ENCODE measurements at regions of chr20 and their contacts with region 1.

Region 1: DNA sequence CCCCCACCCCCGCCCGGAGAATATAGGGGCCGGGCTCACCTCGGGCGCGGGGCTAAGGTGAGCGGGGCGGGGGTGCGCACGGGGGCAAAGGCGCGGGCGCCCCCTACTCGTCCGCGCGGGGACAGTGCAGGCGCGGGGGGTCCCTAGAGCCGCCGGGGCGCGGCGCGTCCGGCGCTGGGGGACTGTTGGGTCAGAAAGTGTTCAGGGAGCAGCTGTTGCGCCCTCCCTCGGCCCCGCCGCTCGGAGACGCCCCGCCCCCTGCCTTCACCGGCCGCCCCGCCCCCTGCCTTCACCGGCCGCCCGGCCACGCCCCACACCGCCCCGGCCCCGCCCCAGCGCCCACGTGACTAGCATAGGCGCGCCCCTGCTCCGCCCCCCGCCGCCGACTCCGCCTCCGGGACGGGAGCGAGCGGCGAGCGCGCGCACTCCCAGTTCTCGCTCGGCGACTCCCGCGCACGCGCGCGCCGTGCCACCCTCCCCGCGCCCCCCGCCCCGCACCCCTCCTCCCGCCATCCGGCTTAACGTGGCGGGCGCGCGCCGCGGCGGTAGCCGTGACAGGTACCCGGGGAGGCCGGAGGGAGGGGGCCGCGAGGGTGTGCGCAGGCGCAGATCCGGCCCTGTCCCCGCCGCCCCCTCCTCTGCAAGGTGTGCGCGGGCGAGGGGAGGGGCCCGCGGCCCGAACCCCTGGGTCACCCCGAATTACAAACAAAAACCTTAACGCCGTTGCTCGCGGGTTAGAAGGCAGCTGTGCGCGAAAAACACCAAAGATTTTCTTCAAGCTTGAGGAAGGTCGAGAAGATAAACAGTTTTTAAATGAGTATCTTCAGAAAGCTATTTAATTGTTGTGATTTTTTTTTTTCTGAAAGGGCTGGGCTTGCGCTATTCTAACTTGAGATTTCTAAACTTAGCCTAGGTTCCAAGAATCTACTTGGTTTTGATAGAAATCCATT is 704 bp upstream of the ZNF217 start:
- DNase-seq: peak; percentile 99
- ATAC-seq: peak; percentile 74
- H3K4me3 Mint-ChIP-seq: peak overlapping the region; percentile 93
- H3K27ac Mint-ChIP-seq: peak overlapping the region; percentile 89
- H3K4me1 Mint-ChIP-seq: peaks cover 57% of the 10 kb centered on the region
- H3K27me3 Mint-ChIP-seq: no peaks in the 10 kb centered on the region
- CTCF ChIP-seq: no peak

Region 2: DNA sequence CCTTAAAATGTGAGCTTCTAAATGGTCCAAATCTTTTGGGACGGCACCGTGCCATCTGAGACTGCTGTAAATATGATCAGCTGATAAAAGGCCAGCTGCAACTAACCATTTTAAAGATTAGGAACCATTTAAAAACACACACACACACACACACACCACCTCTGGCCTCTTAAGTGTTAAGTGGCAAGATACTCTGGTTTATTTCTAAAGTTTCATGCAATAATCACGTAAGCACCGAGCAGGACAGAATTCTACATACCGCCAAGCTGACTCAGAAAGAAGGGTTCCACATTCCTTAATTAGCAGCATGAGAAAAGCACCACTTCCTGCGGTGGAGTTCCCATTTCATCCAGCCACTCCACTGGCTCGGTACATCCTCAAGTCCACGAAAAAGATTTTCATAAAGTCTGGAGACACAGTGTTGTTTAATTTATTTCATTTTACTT is 17.1 kb after region 1 on chr20:
- CTCF ChIA-PET with region 1: interaction called, 5 read pairs
- POLR2A ChIA-PET with region 1: interaction called, 14 read pairs
- intact Hi-C with region 1: loop called (anchors 2 kb)
- DNase-seq: no peak
- ATAC-seq: no peak
- H3K4me3 Mint-ChIP-seq: peak overlapping the region; percentile 24
- H3K27ac Mint-ChIP-seq: peak overlapping the region; percentile 46
- H3K4me1 Mint-ChIP-seq: peaks cover 31% of the 10 kb centered on the region
- H3K27me3 Mint-ChIP-seq: no peaks in the 10 kb centered on the region
- CTCF ChIP-seq: no peak

Region 3: GRCh38 chr20:53652090-53652858 is 57.9 kb after region 1 on chr20:
- CTCF ChIA-PET with region 1: no interaction called
- POLR2A ChIA-PET with region 1: interaction called, 11 read pairs
- intact Hi-C with region 1: loop called (anchors 2 kb)
- DNase-seq: no peak
- ATAC-seq: peak; percentile 43
- H3K4me3 Mint-ChIP-seq: peak overlapping the region; percentile 61
- H3K27ac Mint-ChIP-seq: peak overlapping the region; percentile 90
- H3K4me1 Mint-ChIP-seq: peaks cover 50% of the 10 kb centered on the region
- H3K27me3 Mint-ChIP-seq: no peaks in the 10 kb centered on the region
- CTCF ChIP-seq: no peak

Region 4: DNA sequence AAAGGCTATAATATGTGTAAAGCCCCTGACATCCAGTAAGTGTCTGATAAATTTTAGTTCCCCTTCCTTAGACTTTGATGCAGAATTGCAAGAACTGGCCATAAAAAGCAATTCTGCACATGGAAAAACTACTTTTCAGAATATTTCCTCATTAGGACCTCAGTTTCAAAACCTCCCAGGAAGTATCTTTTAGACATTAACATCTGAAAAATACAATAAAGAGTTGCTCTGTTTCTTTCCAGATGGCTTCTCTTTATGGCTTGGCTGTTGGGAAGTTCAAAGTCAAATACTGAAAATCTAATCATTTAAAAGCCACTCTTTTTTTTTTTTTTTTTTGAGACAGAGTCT is 105.6 kb after region 1 on chr20:
- CTCF ChIA-PET with region 1: no interaction called
- POLR2A ChIA-PET with region 1: no interaction called
- intact Hi-C with region 1: no loop called
- DNase-seq: no peak
- ATAC-seq: no peak
- H3K4me3 Mint-ChIP-seq: no peak overlapping the region
- H3K27ac Mint-ChIP-seq: no peak overlapping the region
- H3K4me1 Mint-ChIP-seq: peaks cover 4% of the 10 kb centered on the region
- H3K27me3 Mint-ChIP-seq: no peaks in the 10 kb centered on the region
- CTCF ChIP-seq: no peak

Region 5: GRCh38 chr20:53738039-53738944 is 143.9 kb after region 1 on chr20:
- CTCF ChIA-PET with region 1: interaction called, 4 read pairs
- POLR2A ChIA-PET with region 1: interaction called, 13 read pairs
- intact Hi-C with region 1: no loop called
- DNase-seq: no peak
- ATAC-seq: no peak
- H3K4me3 Mint-ChIP-seq: peak overlapping the region; percentile 74
- H3K27ac Mint-ChIP-seq: peak overlapping the region; percentile 97
- H3K4me1 Mint-ChIP-seq: peaks cover 78% of the 10 kb centered on the region
- H3K27me3 Mint-ChIP-seq: no peaks in the 10 kb centered on the region
- CTCF ChIP-seq: no peak

Region 6: DNA sequence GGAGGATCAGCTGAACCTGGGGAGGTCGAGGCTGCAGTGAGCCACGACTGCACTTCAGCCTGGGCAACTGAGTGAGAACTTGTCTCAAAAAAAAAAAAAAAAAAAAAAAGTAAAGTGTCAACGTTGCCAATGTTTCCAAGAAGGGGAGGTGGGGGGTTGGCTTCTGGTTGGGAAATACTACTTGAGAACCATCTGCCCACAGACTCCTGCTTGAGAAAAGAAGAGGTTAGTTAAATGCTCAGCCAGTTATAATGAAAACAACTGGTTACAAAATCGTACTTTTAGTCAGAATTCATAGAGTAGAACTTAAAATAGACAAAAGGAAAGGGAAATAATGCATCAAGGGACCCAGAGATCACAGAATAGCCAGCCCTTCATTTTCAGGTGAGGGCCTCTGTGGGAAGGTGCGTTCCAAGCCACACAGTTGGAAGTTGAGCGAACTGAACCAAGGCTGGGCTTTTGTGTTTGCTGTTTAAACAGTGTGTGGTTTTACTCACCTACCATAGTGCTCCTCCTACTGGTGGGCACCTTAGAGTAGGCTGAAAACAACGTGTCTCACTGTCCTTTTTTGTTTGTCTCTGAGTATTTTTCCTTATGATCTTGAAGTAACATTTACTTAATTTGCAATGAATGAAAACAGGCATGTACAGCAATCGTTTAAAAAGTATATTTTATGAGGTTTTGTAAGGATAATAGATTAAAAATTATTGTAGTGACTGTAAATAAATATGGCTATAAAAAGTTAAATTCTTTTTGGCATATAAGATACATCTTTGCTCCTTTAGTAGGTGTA is 275.3 kb after region 1 on chr20:
- CTCF ChIA-PET with region 1: interaction called, 3 read pairs
- POLR2A ChIA-PET with region 1: interaction called, 10 read pairs
- intact Hi-C with region 1: no loop called
- DNase-seq: peak; percentile 27
- ATAC-seq: peak; percentile 80
- H3K4me3 Mint-ChIP-seq: peak overlapping the region; percentile 60
- H3K27ac Mint-ChIP-seq: peak overlapping the region; percentile 85
- H3K4me1 Mint-ChIP-seq: peaks cover 71% of the 10 kb centered on the region
- H3K27me3 Mint-ChIP-seq: no peaks in the 10 kb centered on the region
- CTCF ChIP-seq: no peak

Region 7: GRCh38 chr20:53926428-53927028 is 332.2 kb after region 1 on chr20:
- CTCF ChIA-PET with region 1: no interaction called
- POLR2A ChIA-PET with region 1: interaction called, 10 read pairs
- intact Hi-C with region 1: loop called (anchors 1 kb)
- DNase-seq: peak; percentile 34
- ATAC-seq: peak; percentile 83
- H3K4me3 Mint-ChIP-seq: peak overlapping the region; percentile 83
- H3K27ac Mint-ChIP-seq: peak overlapping the region; percentile 96
- H3K4me1 Mint-ChIP-seq: peaks cover 92% of the 10 kb centered on the region
- H3K27me3 Mint-ChIP-seq: no peaks in the 10 kb centered on the region
- CTCF ChIP-seq: no peak

Measured in activated B cell treated with CpG ODN at 0.5 μM for 24 hours (primary cell).